ENCODE measurements at regions of chr4 and their contacts with region 1.

Region 1: GRCh38 chr4:70839589-70840093 is at the start of gene GRSF1:
- DNase-seq: peak; percentile 93 to 97 (median 94)
- H3K4me3 ChIP-seq: peak within 1 kb of the TSS; percentile 78
- H3K4me3 Mint-ChIP-seq: peak within 1 kb of the TSS; percentile 91 to 99 (median 96)
- H3K27ac ChIP-seq: peak within 1 kb of the TSS; percentile 81
- H3K27ac Mint-ChIP-seq: peak within 1 kb of the TSS; percentile 90 to 100 (median 97)
- H3K4me1 ChIP-seq: peaks cover 29% of the 10 kb centered on the region
- H3K4me1 Mint-ChIP-seq: peaks cover 26 to 35% (median 29%) of the 10 kb centered on the region in 3 donors
- H3K27me3 ChIP-seq: no peaks in the 10 kb centered on the region
- H3K27me3 Mint-ChIP-seq: no peaks in the 10 kb centered on the region
- total RNA-seq, gene GRSF1: 112 to 125 TPM

Region 2: DNA sequence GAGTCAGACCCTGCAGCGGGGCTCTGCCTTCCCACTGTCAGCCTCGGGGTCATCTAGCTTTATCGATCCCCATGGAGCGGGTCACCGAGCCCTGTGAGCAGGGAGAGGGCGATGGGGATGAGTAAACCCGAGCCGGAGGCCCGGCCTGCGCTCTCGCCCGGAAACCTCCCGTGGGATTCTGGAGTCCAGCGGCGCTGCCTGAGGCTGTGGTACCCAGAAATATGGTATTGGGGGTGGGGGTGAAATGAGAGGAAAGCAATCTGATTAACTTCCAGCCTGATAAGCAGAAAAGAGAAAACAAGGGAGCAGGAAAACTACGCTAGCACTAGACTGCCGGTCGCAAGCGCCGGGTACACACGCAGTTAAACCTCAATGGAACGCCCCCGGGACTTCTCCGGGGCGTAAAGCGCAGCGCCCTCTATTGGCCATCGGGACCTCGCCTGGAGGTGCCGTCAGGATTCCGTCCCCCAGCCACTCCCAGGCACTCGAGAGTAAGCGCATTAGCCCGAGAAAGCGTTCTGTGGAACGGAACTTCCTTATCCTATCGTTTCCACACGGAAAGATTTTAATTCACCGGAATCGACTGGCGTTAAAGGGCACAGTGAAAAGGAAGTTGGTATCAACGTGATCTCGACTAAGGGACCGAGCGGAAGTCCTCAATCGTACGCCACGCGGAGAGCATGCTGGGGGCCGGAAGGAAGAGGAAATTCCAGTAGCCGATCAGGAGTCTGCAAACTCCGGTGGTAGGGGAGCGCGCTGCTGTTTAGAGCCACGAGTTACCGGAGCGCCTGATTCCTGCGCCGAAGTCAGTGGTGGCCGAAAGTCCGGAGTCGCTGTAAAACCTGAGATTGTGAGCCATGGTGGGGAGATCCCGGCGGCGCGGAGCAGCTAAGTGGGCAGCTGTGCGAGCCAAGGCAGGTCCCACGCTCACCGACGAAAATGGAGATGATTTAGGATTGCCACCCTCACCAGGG is 151.5 kb before region 1 on chr4 and contains the start of gene UTP3:
- CTCF ChIA-PET with region 1: interaction called, 4 read pairs
- POLR2A ChIA-PET with region 1: interaction called, 15 read pairs
- DNase-seq: peak; percentile 86 to 94 (median 92)
- H3K4me3 ChIP-seq: peak within 1 kb of the TSS; percentile 92
- H3K4me3 Mint-ChIP-seq: peak within 1 kb of the TSS; percentile 91 to 100 (median 96)
- H3K27ac ChIP-seq: peak within 1 kb of the TSS; percentile 86
- H3K27ac Mint-ChIP-seq: peak within 1 kb of the TSS; percentile 89 to 100 (median 98)
- H3K4me1 ChIP-seq: peaks cover 17% of the 10 kb centered on the region
- H3K4me1 Mint-ChIP-seq: peaks cover 37 to 57% (median 43%) of the 10 kb centered on the region in 3 donors
- H3K27me3 ChIP-seq: no peaks in the 10 kb centered on the region
- H3K27me3 Mint-ChIP-seq: no peaks in the 10 kb centered on the region
- total RNA-seq, gene UTP3: 42.5 to 43.4 TPM

Region 3: GRCh38 chr4:70704331-70705145 is 135.1 kb before region 1 on chr4:
- CTCF ChIA-PET with region 1: interaction called, 7 read pairs
- POLR2A ChIA-PET with region 1: interaction called, 18 read pairs
- DNase-seq: peak; percentile 56 to 77 (median 62)
- H3K4me3 ChIP-seq: peak overlapping the region; percentile 40
- H3K4me3 Mint-ChIP-seq: peak overlapping the region; percentile 87 to 99 (median 93)
- H3K27ac ChIP-seq: peak overlapping the region; percentile 39
- H3K27ac Mint-ChIP-seq: peak overlapping the region; percentile 88 to 97 (median 93)
- H3K4me1 ChIP-seq: peaks cover 27% of the 10 kb centered on the region
- H3K4me1 Mint-ChIP-seq: peaks cover 19 to 38% (median 32%) of the 10 kb centered on the region in 3 donors
- H3K27me3 ChIP-seq: no peaks in the 10 kb centered on the region
- H3K27me3 Mint-ChIP-seq: peaks cover 0 to 1% of the 10 kb centered on the region in 2 donors

Region 4: DNA sequence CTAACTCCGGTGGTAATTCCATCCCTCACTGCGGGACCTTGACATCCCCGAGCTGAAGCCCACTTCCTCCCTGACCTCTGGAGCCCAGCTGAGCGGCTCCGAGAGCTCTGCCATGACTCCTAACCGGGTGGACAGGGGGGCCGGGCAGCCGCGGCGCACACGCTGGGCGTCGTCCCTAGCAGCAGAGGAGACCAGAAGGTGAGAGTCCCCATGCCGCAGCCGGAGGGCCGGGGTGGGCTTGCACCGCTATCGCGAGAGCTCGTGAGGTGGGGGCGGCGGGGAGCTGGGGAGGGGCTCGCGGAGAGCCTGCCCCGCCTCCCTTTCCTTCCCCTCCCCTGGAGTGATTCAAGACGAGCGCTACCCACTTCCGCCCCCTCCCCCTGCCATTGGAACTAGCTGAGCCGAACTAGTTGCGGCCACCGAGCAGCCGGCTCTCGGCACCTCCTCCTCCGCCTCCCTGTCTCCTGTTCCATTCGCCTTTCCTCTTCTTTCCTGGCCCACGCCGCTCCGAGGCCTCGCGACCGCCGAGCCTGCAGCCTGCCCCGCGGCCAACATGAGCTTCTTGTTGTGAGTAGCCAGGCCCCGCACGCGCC is 62.4 kb after region 1 on chr4 and contains the start of gene MOB1B:
- CTCF ChIA-PET with region 1: interaction called, 4 read pairs
- POLR2A ChIA-PET with region 1: interaction called, 21 read pairs
- DNase-seq: peak; percentile 78 to 91 (median 80)
- H3K4me3 ChIP-seq: peak within 1 kb of the TSS; percentile 97
- H3K4me3 Mint-ChIP-seq: peak within 1 kb of the TSS; percentile 96 to 99 (median 98)
- H3K27ac ChIP-seq: peak within 1 kb of the TSS; percentile 77
- H3K27ac Mint-ChIP-seq: peak within 1 kb of the TSS; percentile 8 to 96 (median 88)
- H3K4me1 ChIP-seq: peaks cover 21% of the 10 kb centered on the region
- H3K4me1 Mint-ChIP-seq: peaks cover 21 to 44% (median 27%) of the 10 kb centered on the region in 3 donors
- H3K27me3 ChIP-seq: no peaks in the 10 kb centered on the region
- H3K27me3 Mint-ChIP-seq: peaks cover 0 to 1% of the 10 kb centered on the region in 2 donors
- total RNA-seq, gene MOB1B: 18.4 to 19.8 TPM

Region 5: GRCh38 chr4:71081192-71081591 is 241.6 kb after region 1 on chr4:
- CTCF ChIA-PET with region 1: no interaction called
- POLR2A ChIA-PET with region 1: no interaction called
- DNase-seq: no peak
- H3K4me3 ChIP-seq: no peak overlapping the region
- H3K4me3 Mint-ChIP-seq: no peak overlapping the region
- H3K27ac ChIP-seq: no peak overlapping the region
- H3K27ac Mint-ChIP-seq: no peak overlapping the region
- H3K4me1 ChIP-seq: no peaks in the 10 kb centered on the region
- H3K4me1 Mint-ChIP-seq: peaks cover 0 to 5% (median 2%) of the 10 kb centered on the region in 3 donors
- H3K27me3 ChIP-seq: no peaks in the 10 kb centered on the region
- H3K27me3 Mint-ChIP-seq: no peaks in the 10 kb centered on the region